ENCODE measurements at regions of chr1 and their contacts with region 1.

Region 1: DNA sequence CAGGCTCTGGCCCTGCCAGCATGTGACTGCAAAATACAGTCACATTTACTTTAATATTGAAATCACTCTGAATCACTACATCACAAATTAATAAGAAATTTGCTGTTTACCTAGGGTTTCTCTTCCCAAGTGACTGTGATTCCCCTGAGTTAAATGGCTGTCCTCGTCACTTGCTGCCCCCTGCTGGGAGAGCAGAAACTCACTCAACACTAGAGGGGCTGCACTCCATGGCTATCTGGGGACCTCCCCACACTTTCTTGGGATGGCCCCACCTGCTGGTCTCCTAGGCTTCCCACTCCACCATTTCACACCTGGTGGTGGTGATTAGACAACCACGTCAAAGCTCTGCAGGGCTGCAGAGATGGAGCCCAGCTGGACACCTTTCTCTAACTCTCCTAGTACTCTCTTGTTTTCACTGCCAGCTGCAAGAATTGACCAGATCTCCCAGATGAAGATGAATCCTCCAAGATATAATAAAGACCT is 63.4 kb downstream of the CD2 start:
- DNase-seq: peak; percentile 90
- H3K4me3 Mint-ChIP-seq: peak overlapping the region; percentile 62
- H3K27ac Mint-ChIP-seq: peak overlapping the region; percentile 89
- H3K4me1 Mint-ChIP-seq: peaks cover 48% of the 10 kb centered on the region
- H3K27me3 Mint-ChIP-seq: no peaks in the 10 kb centered on the region

Region 2: DNA sequence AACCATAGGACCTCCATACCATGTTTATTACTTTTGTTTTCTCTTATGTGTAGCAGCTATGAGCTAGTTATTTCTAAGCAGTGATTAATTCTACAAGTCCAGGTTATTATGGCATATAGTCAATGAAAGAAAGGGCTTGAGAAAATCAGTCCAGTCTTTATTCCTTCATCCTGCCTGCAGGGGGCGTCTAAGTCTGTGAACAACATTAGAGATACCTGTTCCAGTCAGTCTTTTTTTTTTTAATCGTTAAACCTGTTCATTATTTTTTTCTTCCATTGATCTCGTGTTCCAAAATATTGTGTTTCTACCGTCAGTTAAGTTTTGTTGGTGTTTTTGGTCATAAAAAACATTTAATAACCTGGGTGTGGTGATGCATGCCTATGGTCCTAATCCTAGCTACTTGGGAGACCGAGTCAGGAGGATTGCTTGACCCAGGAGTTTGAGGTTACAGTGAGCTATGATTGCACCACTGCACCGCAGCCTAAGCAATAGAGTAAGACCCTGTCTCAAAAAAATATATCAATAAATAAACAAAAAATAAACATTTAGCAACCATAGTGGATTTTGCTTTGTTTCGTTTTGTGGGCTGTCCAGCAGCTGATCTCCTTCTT is 92.8 kb before region 1 on chr1:
- intact Hi-C with region 1: loop called (anchors 1 kb)
- DNase-seq: peak; percentile 92
- H3K4me3 Mint-ChIP-seq: no peak overlapping the region
- H3K27ac Mint-ChIP-seq: no peak overlapping the region
- H3K4me1 Mint-ChIP-seq: peaks cover 30% of the 10 kb centered on the region
- H3K27me3 Mint-ChIP-seq: no peaks in the 10 kb centered on the region

Region 3: DNA sequence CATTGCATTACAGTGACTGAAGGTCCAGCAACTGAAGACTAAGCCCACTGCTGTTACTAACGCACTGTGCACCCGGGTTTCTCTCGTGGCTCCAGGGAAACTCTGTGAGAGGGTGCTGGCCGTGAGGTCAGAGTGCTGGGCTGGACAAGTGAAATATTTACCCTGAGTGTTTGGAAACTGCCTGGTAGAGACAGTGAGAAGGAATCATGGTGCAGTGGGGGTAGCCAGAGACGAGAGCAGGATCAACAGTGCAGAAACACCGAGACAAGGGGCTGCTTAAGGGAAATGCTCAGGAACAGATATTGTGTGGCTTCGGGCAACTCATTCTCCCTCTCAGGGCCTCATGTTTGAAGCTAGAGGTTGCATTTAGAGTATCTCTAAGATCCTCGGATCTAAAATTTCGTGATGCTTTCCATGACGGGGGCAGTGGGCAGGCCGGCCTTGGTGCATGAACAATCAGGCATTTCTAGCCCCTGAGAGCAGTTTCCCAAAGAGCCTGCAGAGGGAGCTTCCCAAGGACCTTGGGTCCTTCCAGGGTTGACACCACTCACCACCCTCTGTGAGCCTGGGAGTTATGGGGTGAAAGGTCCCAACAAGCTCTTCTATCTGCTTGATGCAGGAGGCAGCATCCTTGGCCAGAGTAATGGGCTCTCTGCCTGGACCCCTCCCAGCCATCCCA is 53.7 kb before region 1 on chr1:
- intact Hi-C with region 1: loop called (anchors 1 kb)
- DNase-seq: peak; percentile 86
- H3K4me3 Mint-ChIP-seq: peak overlapping the region; percentile 98
- H3K27ac Mint-ChIP-seq: peak overlapping the region; percentile 99
- H3K4me1 Mint-ChIP-seq: peaks cover 85% of the 10 kb centered on the region
- H3K27me3 Mint-ChIP-seq: no peaks in the 10 kb centered on the region

Region 4: GRCh38 chr1:116794804-116795481 is 22.7 kb before region 1 on chr1:
- intact Hi-C with region 1: loop called (anchors 2 kb)
- DNase-seq: no peak
- H3K4me3 Mint-ChIP-seq: no peak overlapping the region
- H3K27ac Mint-ChIP-seq: peak overlapping the region; percentile 29
- H3K4me1 Mint-ChIP-seq: peaks cover 55% of the 10 kb centered on the region
- H3K27me3 Mint-ChIP-seq: no peaks in the 10 kb centered on the region

Region 5: DNA sequence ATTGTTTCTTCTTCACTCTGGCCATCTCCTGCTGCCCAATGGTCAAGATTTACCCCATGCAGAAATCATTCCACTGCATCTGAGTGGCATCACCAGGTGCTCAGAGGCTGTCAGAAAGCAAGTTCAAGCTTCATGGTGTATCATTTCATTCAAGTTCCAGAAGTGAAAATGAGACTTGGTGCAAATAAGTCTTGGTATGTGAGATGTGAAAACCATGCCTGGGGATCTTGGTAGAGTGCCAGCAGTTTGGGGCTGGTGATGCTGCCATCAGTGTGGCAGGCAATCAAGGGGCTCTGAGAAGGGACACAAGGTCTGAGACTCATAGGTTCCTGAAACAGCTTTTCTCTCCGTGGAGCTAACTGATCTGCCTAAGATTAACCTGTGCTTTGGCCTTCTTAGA is 11.4 kb before region 1 on chr1:
- intact Hi-C with region 1: loop called (anchors 1 kb)
- DNase-seq: peak; percentile 83
- H3K4me3 Mint-ChIP-seq: peak overlapping the region; percentile 79
- H3K27ac Mint-ChIP-seq: peak overlapping the region; percentile 95
- H3K4me1 Mint-ChIP-seq: peaks cover 84% of the 10 kb centered on the region
- H3K27me3 Mint-ChIP-seq: no peaks in the 10 kb centered on the region

Region 6: DNA sequence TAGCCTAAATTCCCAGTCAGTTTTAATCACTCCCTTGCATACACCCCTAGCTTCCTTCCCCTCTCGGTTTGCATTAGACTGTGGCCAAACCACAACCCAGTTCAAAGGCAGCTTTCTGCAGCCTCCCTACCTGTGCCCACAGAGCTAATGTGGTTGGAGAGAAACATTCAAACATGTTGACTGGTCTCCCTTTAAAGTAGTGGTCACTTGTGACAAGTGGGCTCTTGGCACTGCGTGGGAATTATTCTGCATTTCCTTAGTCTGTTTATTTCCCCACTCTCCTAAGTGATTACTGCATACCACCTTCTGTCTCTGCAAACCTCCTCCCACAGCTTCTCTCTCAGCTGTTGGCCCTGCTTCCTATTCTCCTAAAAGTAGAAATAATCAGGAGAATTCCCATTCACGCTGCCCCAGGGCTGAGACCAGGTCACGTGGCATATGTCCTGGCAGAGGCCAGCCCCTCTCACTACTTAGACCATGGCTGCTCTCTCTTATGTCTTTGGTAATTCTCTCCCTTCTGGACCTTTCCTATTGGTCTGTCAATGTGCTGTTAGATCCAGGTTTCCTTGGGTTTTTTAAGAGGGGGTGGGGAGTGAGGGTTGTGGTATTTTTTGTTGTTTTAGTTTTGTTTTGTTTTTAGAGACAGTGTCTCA is 145.5 kb after region 1 on chr1:
- intact Hi-C with region 1: no loop called
- DNase-seq: peak; percentile 70
- H3K4me3 Mint-ChIP-seq: no peak overlapping the region
- H3K27ac Mint-ChIP-seq: no peak overlapping the region
- H3K4me1 Mint-ChIP-seq: no peaks in the 10 kb centered on the region
- H3K27me3 Mint-ChIP-seq: no peaks in the 10 kb centered on the region

Measured in activated CD4-positive, alpha-beta T cell treated with anti-CD3 and anti-CD28 coated beads, Interleukin-2, amount 10 ng/mL, durations not matched to agents 24 days and 14 days (primary cell).